ENCODE measurements at regions of chr13 and their contacts with region 1.

Region 1: GRCh38 chr13:36981156-36981743 is 17.9 kb downstream of the ALG5 start:
- DNase-seq: peak; percentile 75
- H3K4me3 ChIP-seq: no peak overlapping the region
- H3K27ac ChIP-seq: no peak overlapping the region
- H3K4me1 ChIP-seq: peaks cover 14% of the 10 kb centered on the region; the same call in 1 of the 2 replicates
- H3K27me3 ChIP-seq: no peaks in the 10 kb centered on the region

Region 2: GRCh38 chr13:36086117-36086516 is 895.1 kb before region 1 on chr13:
- in situ Hi-C with region 1: no loop called
- DNase-seq: no peak
- H3K4me3 ChIP-seq: no peak overlapping the region
- H3K27ac ChIP-seq: no peak overlapping the region
- H3K4me1 ChIP-seq: peaks cover 7% of the 10 kb centered on the region; the same call in 1 of the 2 replicates
- H3K27me3 ChIP-seq: no peaks in the 10 kb centered on the region; the same call in 1 of the 2 replicates

Region 3: DNA sequence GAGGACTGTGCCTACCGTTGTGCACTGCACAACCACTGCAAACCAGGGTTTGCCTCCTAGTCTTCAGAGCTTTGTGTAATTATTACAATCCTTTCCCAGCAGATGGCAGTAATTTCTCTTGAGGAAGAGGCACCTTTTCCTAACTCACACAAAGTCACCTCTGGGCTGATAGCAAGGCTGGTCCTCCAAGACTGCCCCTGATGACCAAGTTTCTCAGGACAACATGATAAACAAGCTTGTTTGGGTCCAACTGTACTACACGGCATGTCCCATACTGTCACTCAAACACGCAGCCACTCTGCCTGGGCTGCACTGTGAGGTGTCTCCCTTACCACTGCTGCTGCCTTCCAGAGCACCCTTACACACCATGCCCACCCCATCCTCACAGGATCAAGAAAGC is 123.0 kb before region 1 on chr13:
- in situ Hi-C with region 1: loop called (anchors 5 kb)
- DNase-seq: peak; percentile 77
- H3K4me3 ChIP-seq: no peak overlapping the region
- H3K27ac ChIP-seq: no peak overlapping the region
- H3K4me1 ChIP-seq: 0 out of 2 replicates have a peak, but pooled peaks cover 6% of the 10 kb centered on the region
- H3K27me3 ChIP-seq: no peaks in the 10 kb centered on the region